Activated CD4-positive, alpha-beta memory T cell treated with anti-CD3 and anti-CD28 coated beads for 36 hours (primary cell): ENCODE measurements at regions of chr7 and their contacts with region 1.

Region 1: GRCh38 chr7:2978403-2978802 is 65.3 kb downstream of the CARD11 start:
- DNase-seq: peak; percentile 97
- H3K4me3 Mint-ChIP-seq: peak overlapping the region; percentile 63
- H3K27ac Mint-ChIP-seq: peak overlapping the region; percentile 91
- H3K4me1 Mint-ChIP-seq: peaks cover 69% of the 10 kb centered on the region
- H3K27me3 Mint-ChIP-seq: no peaks in the 10 kb centered on the region

Region 2: DNA sequence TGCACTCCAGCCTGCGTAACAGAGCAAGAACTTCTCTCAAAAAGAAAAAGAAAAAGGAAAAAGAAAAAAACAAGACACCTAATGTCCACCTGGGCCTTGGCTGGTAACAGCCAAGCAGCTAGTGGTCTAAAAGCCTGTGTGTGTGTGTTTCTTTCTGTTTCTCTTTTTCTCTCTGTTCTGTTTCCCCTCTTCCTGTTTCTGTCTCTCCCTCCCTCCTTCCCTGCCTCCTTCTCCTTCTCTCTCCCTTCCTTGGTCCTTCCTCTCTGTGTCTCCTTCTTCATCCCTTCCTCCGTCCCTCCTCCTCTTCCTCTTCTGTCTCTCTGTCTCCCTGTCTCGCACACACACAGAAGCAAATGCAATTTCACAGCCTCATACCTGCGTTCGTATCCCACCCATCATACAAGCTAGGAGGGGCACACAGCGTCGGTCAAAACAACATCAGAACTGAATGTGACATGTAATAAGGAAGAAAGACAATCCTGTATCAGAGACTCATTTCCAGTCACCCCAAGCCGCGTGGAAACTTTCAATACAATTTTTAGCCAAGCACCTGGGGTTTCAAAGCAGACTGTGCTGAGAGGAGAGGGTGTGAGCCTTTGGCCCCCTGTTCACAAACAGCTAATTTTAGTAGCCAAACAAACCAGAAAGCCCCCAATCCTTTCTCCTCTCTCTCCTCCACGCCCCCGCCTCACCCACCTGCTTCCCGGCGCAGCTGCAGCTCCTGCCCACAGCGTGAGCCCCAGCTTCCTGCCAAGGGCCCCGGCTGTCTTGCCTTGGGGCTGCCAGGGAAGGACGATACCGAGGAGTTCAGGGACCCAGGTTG is 84.1 kb before region 1 on chr7:
- CTCF ChIA-PET with region 1: no interaction called
- POLR2A ChIA-PET with region 1: no interaction called
- intact Hi-C with region 1: loop called (anchors 1 kb)
- DNase-seq: peak; percentile 84
- H3K4me3 Mint-ChIP-seq: peak overlapping the region; percentile 73
- H3K27ac Mint-ChIP-seq: peak overlapping the region; percentile 94
- H3K4me1 Mint-ChIP-seq: peaks cover 23% of the 10 kb centered on the region
- H3K27me3 Mint-ChIP-seq: no peaks in the 10 kb centered on the region

Region 3: DNA sequence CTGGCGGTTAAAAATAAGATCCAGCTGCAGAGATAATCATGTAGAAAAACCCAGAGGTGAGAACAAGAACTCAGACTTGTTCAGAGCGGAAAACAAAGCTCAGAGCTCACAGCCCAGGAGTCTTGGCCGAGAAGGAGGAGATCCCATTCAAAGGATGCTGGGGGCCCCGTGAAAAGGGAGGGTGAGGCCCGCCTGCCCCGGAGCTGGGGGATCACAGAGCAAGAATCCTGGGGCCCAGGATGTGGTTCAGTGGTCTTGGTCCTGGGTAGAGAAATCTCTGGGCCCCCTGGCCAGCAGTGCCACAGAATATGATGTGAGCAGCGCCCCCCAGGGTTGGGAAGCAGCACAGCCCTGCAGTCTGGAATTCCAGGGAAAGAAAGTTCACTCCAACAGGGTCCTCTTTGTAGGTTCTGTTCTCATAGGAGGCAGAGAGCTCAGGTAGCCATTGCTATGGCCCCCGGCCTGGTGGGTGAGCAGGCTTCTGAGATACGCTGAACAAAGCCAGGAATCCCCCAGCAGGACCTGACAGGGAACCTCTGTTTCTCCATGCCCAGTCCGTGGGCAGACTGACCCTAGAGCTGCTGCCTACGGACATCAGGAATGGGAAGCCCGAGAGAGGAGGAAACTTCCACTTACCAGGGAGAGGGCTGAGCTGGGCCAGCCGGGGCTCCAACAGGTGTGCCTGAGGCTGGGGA is 56.6 kb before region 1 on chr7:
- CTCF ChIA-PET with region 1: no interaction called
- POLR2A ChIA-PET with region 1: no interaction called
- intact Hi-C with region 1: no loop called
- DNase-seq: no peak
- H3K4me3 Mint-ChIP-seq: no peak overlapping the region
- H3K27ac Mint-ChIP-seq: no peak overlapping the region
- H3K4me1 Mint-ChIP-seq: no peaks in the 10 kb centered on the region
- H3K27me3 Mint-ChIP-seq: no peaks in the 10 kb centered on the region

Region 4: GRCh38 chr7:2956526-2957368 is 21.7 kb before region 1 on chr7:
- CTCF ChIA-PET with region 1: no interaction called
- POLR2A ChIA-PET with region 1: interaction called, 3 read pairs
- intact Hi-C with region 1: loop called (anchors 1 kb)
- DNase-seq: peak; percentile 79
- H3K4me3 Mint-ChIP-seq: no peak overlapping the region
- H3K27ac Mint-ChIP-seq: peak overlapping the region; percentile 91
- H3K4me1 Mint-ChIP-seq: peaks cover 65% of the 10 kb centered on the region
- H3K27me3 Mint-ChIP-seq: no peaks in the 10 kb centered on the region

Region 5: GRCh38 chr7:2964208-2964607 is 14.2 kb before region 1 on chr7:
- CTCF ChIA-PET with region 1: no interaction called
- POLR2A ChIA-PET with region 1: interaction called, 5 read pairs
- intact Hi-C with region 1: loop called (anchors 1 kb)
- DNase-seq: no peak
- H3K4me3 Mint-ChIP-seq: no peak overlapping the region
- H3K27ac Mint-ChIP-seq: no peak overlapping the region
- H3K4me1 Mint-ChIP-seq: peaks cover 49% of the 10 kb centered on the region
- H3K27me3 Mint-ChIP-seq: no peaks in the 10 kb centered on the region

Region 6: GRCh38 chr7:3229904-3230470 is 251.6 kb after region 1 on chr7:
- CTCF ChIA-PET with region 1: no interaction called
- POLR2A ChIA-PET with region 1: no interaction called
- intact Hi-C with region 1: no loop called
- DNase-seq: no peak
- H3K4me3 Mint-ChIP-seq: no peak overlapping the region
- H3K27ac Mint-ChIP-seq: no peak overlapping the region
- H3K4me1 Mint-ChIP-seq: peaks cover 22% of the 10 kb centered on the region
- H3K27me3 Mint-ChIP-seq: no peaks in the 10 kb centered on the region